Left cardiac atrium (tissue), 4 donors: ENCODE measurements at regions of chr5 and their contacts with region 1.

Region 1: DNA sequence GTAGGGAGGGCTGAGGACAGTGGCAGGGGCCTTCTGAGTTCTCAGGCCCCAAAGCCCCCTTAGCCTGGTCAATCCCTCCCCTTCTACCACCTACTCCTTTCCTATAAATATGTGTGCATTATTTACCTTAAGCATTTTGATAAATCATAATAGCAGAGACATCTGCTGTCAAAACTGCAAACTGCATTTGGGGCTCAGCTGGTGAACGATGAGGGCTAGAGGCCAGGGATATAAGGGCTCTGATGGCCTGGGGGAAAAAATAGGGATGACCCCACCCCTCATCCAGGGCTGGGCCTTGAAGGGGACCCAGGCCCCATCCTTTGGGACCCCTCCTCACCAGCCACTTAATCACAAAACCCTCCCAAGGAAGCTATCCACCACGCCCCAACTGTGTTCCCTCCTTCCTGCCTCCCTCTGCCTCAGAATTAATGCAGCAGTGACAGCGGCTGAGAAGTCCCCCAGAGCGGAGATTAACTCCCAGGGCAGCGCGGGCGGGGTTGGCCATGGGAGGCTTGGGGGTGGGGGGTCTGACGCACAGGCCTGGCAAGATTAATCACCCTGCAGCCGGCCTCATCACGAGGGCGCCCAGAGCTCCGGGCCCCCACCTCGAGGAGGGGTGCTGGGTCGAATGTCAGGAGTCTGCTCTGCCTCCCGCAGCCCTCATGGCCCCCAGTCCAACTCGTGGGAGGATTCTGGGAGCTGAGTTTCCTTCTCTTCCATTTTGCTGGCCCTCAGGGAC is 42.1 kb downstream of the CXXC5 start:
- DNase-seq: peak; percentile 68
- ATAC-seq: peak; percentile 35 to 48

Region 2: GRCh38 chr5:139633295-139634027 is 56.8 kb before region 1 on chr5:
- intact Hi-C with region 1: loop called in 1 of 2 experiments (anchors 1 kb)
- DNase-seq: peak; percentile 67
- ATAC-seq: peak; percentile 28 to 32

Region 3: DNA sequence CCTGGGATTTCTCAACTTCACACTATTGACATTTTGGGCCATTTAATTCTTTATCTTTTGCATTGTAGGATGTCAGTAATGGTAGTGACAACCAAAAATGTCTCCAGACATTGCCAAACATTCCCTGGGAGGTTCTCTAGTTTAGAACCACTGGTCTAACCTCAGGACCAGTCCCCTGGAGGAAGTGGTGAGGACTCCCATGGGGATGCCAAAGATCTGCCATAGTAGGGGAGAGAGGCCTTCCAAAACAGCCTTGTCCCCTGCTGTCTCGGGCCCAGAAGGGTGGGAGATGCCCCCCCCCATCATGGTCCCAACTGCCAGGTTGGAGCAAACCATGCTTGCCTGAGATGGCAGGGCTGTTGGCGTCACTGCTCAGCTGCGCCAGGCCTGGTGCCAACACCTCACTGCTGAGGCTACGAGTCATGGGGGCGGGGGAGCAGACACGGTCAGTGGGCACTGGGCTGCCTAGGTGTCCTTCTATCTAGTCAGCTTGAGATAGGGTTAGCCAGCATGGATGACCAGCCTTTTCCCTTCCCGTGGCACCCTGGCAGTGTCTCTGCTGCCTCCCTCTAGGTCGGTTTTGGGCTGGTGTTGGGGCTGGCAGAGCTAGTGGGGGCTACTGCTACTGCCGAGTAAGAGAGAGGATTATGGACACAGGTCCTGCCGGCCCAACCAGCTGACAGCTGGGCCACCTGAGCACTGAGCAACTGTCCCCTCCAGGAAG is 50.5 kb before region 1 on chr5:
- intact Hi-C with region 1: loop called in 1 of 2 experiments (anchors 5 kb)
- DNase-seq: peak; percentile 68
- ATAC-seq: peak in 1 of 2 donors; percentile 2

Region 4: DNA sequence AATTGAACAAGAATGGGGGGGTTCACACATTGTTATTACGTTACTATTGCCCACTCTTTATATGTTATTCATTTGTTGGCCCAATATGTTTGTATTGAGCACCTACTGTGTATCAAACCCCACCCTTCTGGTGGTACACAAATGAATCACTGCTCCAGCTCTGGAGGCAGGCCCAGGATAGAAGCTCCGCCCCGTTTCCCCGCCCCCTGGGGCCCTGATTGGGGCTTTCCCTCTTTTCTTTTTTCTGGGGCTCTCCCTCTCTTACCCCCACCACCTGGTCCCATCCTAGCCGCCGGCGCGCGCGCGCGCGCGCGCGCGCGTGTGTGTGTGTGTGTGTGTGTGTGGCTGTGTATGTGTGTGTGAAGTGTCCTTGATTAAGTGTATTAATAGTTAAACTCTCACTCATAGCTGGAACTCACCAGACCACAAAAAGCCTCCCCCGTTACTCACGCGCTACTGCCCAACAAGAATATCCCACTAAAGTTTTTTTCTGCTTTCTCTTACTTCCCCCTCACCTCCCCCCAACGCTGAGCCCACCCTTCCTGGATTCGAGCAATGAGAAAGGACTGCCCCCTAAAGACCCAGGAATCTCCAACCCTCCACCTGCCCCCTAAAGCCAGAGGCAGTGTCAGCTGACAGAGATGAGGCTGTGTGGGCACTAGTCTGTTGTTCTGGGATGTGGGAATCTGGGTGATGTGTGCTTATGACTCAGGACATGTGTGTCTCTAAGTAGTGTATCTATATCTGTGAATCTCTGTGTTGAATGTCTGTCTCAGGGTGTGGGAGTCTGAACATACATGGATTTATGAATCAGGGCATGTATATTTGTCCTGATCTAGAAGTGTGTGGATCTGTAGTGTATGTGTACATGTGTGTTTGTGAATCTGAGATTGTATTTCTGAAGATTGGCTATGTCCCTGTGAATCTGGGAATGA is 38.1 kb before region 1 on chr5:
- intact Hi-C with region 1: loop called in 1 of 2 experiments (anchors 5 kb)
- DNase-seq: peak; percentile 77
- ATAC-seq: peak; percentile 13 to 21